K562 (cell line): ENCODE measurements at regions of chr1 and their contacts with region 1.

Region 1: GRCh38 chr1:225406976-225407725 is 20.7 kb downstream of the LBR start:
- DNase-seq: no peak
- ATAC-seq: peak; percentile 45
- H3K4me3 ChIP-seq: no peak overlapping the region
- H3K27ac ChIP-seq: no peak overlapping the region
- H3K4me1 ChIP-seq: no peaks in the 10 kb centered on the region
- H3K27me3 ChIP-seq: no peaks in the 10 kb centered on the region
- CTCF ChIP-seq: no peak
- EP300 ChIP-seq: no peak
- POLR2A ChIP-seq: no peak; the same call in 1 of the 2 replicates
- RAD21 ChIP-seq: no peak

Region 2: GRCh38 chr1:225396357-225396756 is 10.8 kb before region 1 on chr1:
- CTCF ChIA-PET with region 1: no interaction called
- POLR2A ChIA-PET with region 1: interaction called, 18 read pairs
- in situ Hi-C with region 1: no loop called
- intact Hi-C with region 1: no loop called
- DNase-seq: no peak
- ATAC-seq: 0 out of 3 replicates have a peak, but pooled peaks have one; percentile 9
- H3K4me3 ChIP-seq: no peak overlapping the region
- H3K27ac ChIP-seq: no peak overlapping the region
- H3K4me1 ChIP-seq: no peaks in the 10 kb centered on the region
- H3K27me3 ChIP-seq: no peaks in the 10 kb centered on the region
- CTCF ChIP-seq: no peak
- EP300 ChIP-seq: no peak
- POLR2A ChIP-seq: no peak
- RAD21 ChIP-seq: no peak

Region 3: GRCh38 chr1:225454733-225455132 is 47.6 kb after region 1 on chr1:
- CTCF ChIA-PET with region 1: no interaction called
- POLR2A ChIA-PET with region 1: no interaction called
- in situ Hi-C with region 1: no loop called
- intact Hi-C with region 1: no loop called
- DNase-seq: peak; percentile 49 to 75 (median 52)
- ATAC-seq: peak; percentile 80
- H3K4me3 ChIP-seq: no peak overlapping the region
- H3K27ac ChIP-seq: peak overlapping the region; percentile 27; the same call in 2 of the 3 replicates
- H3K4me1 ChIP-seq: peaks cover 7 to 11% of the 10 kb centered on the region in 2 experiments; a peak in 3 of 5 replicates
- H3K27me3 ChIP-seq: no peaks in the 10 kb centered on the region
- CTCF ChIP-seq: no peak
- EP300 ChIP-seq: no peak; the same call in 1 of the 2 replicates
- POLR2A ChIP-seq: no peak
- RAD21 ChIP-seq: no peak

Region 4: GRCh38 chr1:225517697-225518096 is 110.5 kb after region 1 on chr1:
- CTCF ChIA-PET with region 1: no interaction called
- POLR2A ChIA-PET with region 1: no interaction called
- in situ Hi-C with region 1: no loop called
- intact Hi-C with region 1: no loop called
- DNase-seq: peak in 1 of 4 experiments; percentile 7
- ATAC-seq: peak; percentile 52
- H3K4me3 ChIP-seq: no peak overlapping the region
- H3K27ac ChIP-seq: no peak overlapping the region
- H3K4me1 ChIP-seq: no peaks in the 10 kb centered on the region
- H3K27me3 ChIP-seq: peaks cover 20 to 28% of the 10 kb centered on the region in 2 experiments
- CTCF ChIP-seq: no peak
- EP300 ChIP-seq: no peak
- POLR2A ChIP-seq: no peak
- RAD21 ChIP-seq: no peak